Activated T-helper 1 cell treated with anti-CD3 and anti-CD28 coated beads, Interleukin-12 subunit alpha, Interleukin-12 subunit beta, Interleukin-2, Interleukin-4 antibody, amounts not matched to agents 30 ng/mL and 10 ng/mL and 1 ng/mL, durations not matched to agents 14 hours and 24 hours and 36 hours (primary cell): ENCODE measurements at regions of chr9 and their contacts with region 1.

Region 1: DNA sequence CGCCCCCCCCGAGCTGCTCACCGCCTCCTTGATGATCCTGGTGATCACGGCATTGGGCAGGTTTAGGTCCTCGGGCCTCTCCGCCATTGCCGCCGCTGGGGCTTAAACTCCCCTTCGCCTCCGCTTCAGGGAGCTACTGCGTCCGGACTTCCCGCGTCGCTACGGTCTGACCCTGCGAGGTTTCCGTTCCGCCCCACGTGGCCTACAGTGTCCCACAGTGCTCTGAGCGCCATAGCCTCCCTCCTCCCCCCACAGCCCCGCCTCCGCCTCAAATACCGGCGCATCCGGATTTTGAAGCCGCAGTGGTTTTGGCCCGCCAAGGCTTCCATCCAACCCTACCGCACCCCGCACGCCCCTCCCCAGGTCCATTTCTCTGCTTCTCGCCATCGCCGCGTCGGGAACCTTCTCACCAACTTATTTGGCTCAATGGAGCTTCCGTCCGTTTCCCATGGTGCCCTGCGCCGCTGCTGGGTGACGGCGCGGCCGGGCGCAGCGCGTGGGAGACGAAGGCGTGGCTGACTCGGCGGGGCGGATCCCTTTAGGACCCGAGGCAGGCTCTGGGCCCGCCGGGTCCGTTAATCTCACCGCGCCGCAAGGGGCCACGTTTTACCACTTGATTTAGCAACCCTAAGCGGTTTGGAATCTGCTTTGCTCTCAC is at the starts of genes C9orf43 and POLE3:
- DNase-seq: peak; percentile 92
- H3K4me3 Mint-ChIP-seq: peak within 1 kb of the TSS; percentile 89
- H3K27ac Mint-ChIP-seq: peak within 1 kb of the TSS; percentile 99
- H3K4me1 Mint-ChIP-seq: peaks cover 22% of the 10 kb centered on the region
- H3K27me3 Mint-ChIP-seq: no peaks in the 10 kb centered on the region
- total RNA-seq, gene C9orf43: 0.42 and 0.62 TPM in 2 replicates
- total RNA-seq, gene POLE3: 90.9 and 95.7 TPM in 2 replicates

Region 2: GRCh38 chr9:113221003-113221799 is 189.1 kb before region 1 on chr9 and contains the starts of genes FKBP15 and SLC31A1:
- intact Hi-C with region 1: loop called (anchors 1 kb)
- DNase-seq: peak; percentile 96
- H3K4me3 Mint-ChIP-seq: peak within 1 kb of the TSS; percentile 98
- H3K27ac Mint-ChIP-seq: peak within 1 kb of the TSS; percentile 97
- H3K4me1 Mint-ChIP-seq: peaks cover 64% of the 10 kb centered on the region
- H3K27me3 Mint-ChIP-seq: no peaks in the 10 kb centered on the region
- total RNA-seq, gene FKBP15: 34.9 and 35.8 TPM in 2 replicates
- total RNA-seq, gene SLC31A1: 16.1 and 17.6 TPM in 2 replicates

Region 3: DNA sequence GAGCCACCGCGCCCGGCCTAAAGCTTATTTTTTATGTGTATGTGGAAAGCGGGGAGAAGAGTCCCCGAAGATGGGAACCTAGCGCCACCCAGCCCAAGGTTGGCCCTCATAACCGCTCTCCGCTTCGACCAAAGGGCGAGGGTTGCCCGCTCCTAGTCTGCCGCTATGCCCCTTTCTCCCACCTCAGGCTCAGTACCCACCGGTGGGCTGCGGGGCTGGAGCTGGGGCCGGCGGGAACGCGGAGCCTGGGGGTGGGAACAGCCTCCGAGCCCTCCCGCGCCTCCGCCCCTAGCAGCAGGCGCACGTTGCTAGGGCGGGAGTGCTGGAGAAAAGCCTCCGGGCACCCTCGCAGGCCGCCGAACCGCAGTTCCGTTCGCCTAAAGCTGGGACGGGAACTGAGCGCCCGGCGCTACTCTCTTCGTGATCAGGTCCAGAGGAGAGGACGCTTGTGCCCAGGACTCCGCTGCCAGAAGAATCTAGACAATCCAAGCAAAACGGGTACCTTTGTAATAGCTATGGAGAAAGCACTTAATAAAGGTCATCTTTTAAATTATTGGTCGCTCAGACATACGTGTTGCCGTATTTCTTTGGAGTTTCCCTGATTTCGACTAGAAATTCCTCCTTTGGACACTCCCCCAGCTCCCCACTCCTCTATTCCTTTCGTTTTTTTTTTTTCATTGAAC is 70.2 kb before region 1 on chr9 and contains the start of gene WDR31:
- intact Hi-C with region 1: loop called (anchors 1 kb)
- DNase-seq: peak; percentile 78
- H3K4me3 Mint-ChIP-seq: peak within 1 kb of the TSS; percentile 80
- H3K27ac Mint-ChIP-seq: peak within 1 kb of the TSS; percentile 89
- H3K4me1 Mint-ChIP-seq: peaks cover 49% of the 10 kb centered on the region
- H3K27me3 Mint-ChIP-seq: no peaks in the 10 kb centered on the region
- total RNA-seq, gene WDR31: 1.9 and 2.2 TPM in 2 replicates

Region 4: DNA sequence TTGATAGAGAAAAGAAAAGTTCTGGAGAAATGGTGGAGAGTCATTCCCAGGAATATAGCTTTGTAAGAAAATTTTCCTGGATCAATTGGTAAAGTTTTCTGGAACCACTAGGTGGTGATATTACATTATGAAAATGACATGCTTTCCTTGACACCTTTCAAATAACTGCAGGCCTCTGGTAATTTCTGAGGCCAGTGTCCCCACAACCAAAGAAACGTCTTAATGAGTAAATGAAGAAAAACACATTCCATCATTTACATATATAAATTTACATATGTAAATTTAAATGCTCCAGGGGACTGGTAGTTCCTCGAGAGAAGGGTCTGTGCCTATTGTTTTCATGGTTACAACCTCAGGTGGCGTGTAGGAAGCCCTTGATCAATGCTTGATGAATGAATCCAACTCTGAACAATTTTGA is 36.0 kb after region 1 on chr9:
- intact Hi-C with region 1: loop called (anchors 2 kb)
- DNase-seq: no peak
- H3K4me3 Mint-ChIP-seq: no peak overlapping the region
- H3K27ac Mint-ChIP-seq: peak overlapping the region; percentile 37
- H3K4me1 Mint-ChIP-seq: no peaks in the 10 kb centered on the region
- H3K27me3 Mint-ChIP-seq: no peaks in the 10 kb centered on the region

Region 5: DNA sequence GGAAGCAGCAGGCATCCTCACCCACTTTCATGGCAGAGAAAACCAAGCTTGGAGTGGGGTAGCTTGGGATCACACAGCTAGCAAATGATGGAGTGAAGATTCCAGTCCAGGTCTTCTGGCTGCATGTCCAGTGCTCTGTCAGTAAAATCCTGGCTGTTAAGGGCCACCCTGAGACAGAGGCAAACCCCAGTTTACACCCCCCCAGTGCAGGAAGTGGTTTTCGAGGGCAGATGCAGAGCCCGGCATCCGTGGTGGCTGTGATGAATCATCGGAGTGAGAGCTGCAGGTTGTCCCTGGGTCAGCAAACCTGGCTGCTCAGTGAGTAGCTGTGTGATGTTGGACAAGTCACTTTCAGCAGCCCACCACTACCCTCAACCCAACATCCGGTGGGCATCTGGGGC is 168.5 kb after region 1 on chr9:
- intact Hi-C with region 1: loop called (anchors 1 kb)
- DNase-seq: peak; percentile 83
- H3K4me3 Mint-ChIP-seq: peak overlapping the region; percentile 69
- H3K27ac Mint-ChIP-seq: peak overlapping the region; percentile 91
- H3K4me1 Mint-ChIP-seq: peaks cover 68% of the 10 kb centered on the region
- H3K27me3 Mint-ChIP-seq: no peaks in the 10 kb centered on the region